ENCODE measurements at regions of chr19 and their contacts with region 1.

Region 1: GRCh38 chr19:40674291-40674690 is 16.2 kb downstream of the NUMBL start:
- DNase-seq: no peak
- ATAC-seq: no peak
- H3K4me3 ChIP-seq: no peak overlapping the region
- H3K27ac ChIP-seq: no peak overlapping the region
- H3K4me1 ChIP-seq: peaks cover 0 to 12% (median 0%) of the 10 kb centered on the region in 12 donors
- H3K27me3 ChIP-seq: no peaks in the 10 kb centered on the region
- CTCF ChIP-seq: no peak
- POLR2A ChIP-seq: no peak

Region 2: DNA sequence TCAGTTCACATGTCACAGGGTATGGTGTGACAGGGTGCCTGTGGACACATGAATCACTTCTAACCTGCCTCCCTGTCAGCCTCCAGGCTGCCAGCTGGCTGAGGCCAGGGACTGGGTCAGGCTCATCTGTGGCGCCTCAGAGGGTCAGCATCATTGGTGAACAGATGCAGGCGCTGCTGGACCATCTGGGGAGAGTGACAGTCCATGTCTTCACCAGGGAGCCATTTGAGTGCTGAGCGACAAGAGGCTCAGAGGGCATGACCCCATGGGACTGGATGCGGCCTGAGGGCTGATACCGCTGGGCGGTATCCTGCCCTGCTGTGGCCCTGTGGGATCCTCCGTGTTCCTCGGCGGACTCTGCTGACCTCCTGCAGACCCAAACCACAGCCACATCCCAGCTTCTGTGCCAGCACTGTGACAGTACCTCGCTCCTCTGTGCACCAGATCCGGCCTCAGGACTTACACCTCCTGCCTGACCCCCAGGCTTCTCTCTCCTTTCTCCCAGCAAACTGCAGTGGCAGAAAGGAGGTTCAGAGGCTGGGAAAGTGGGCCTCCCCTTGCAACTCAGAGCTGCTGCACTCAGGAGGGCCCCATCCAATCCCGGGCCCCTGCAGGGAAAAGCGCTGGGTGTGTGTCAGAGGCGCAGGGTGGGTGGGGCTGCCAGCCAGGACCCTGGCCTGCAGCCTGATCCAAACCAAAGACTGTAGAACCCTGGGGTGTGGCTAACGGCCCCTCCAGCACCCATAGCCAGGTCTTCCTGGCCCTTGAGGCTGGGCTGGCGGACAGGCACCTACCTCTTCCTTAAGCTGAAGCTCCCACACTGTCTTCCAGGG is 65.8 kb after region 1 on chr19:
- intact Hi-C with region 1: loop called in 1 of 10 experiments (anchors 5 kb)
- DNase-seq: no peak
- ATAC-seq: peak in 2 of 4 donors; percentile 5
- H3K4me3 ChIP-seq: peak overlapping the region in 1 of 12 donors; percentile 4
- H3K27ac ChIP-seq: peak overlapping the region in 10 of 12 donors; percentile 3 to 74 (median 58)
- H3K4me1 ChIP-seq: peaks cover 0 to 25% (median 13%) of the 10 kb centered on the region in 12 donors
- H3K27me3 ChIP-seq: no peaks in the 10 kb centered on the region
- CTCF ChIP-seq: no peak
- POLR2A ChIP-seq: no peak

Region 3: DNA sequence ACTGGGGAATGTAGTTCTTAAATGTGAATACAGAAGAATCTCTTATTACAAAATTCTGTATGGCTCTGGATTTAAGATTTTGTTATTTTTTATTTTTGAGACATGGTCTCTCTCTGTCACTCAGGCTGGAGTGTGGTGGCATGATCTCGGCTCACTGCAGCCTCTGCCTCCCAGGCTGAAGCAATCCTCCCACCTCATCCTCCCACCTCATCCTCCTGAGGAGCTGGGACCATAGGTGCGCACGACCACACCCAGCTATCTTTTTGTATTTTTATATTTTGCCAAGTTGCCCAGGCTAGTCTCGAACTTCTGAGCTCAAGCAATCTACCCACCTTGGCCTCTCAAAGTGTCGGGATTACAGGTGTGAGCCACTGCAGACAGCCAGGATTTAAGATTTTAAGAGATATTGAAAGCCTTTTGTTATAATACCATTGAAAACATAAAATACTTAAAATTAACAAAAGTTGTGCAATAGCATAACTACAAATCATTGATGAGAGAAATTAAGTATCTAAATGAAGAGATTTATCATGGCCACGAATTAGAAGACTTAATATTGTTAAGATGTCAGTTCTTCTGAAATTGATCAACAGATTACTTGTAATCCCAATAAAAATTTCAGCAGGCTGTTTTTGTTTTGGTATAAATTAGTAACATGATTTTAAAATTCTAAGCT is 162.6 kb after region 1 on chr19:
- intact Hi-C with region 1: no loop called
- DNase-seq: no peak
- ATAC-seq: no peak
- H3K4me3 ChIP-seq: no peak overlapping the region
- H3K27ac ChIP-seq: no peak overlapping the region
- H3K4me1 ChIP-seq: no peaks in the 10 kb centered on the region
- H3K27me3 ChIP-seq: no peaks in the 10 kb centered on the region
- CTCF ChIP-seq: no peak
- POLR2A ChIP-seq: no peak